A673 (cell line): ENCODE measurements at regions of chr9 and their contacts with region 1.

Region 1: GRCh38 chr9:133184962-133185361 is 21.2 kb upstream of the GBGT1 start:
- DNase-seq: peak; percentile 90
- H3K4me3 ChIP-seq: no peak overlapping the region
- H3K27ac ChIP-seq: no peak overlapping the region
- H3K4me1 ChIP-seq: no peaks in the 10 kb centered on the region
- H3K27me3 ChIP-seq: peaks cover 47% of the 10 kb centered on the region
- CTCF ChIP-seq: peak; percentile 71

Region 2: GRCh38 chr9:132733260-132733815 is 451.6 kb before region 1 on chr9:
- CTCF ChIA-PET with region 1: no interaction called
- POLR2A ChIA-PET with region 1: interaction called, 20 read pairs
- intact Hi-C with region 1: no loop called
- DNase-seq: no peak
- H3K4me3 ChIP-seq: no peak overlapping the region
- H3K27ac ChIP-seq: no peak overlapping the region
- H3K4me1 ChIP-seq: no peaks in the 10 kb centered on the region
- H3K27me3 ChIP-seq: no peaks in the 10 kb centered on the region
- CTCF ChIP-seq: no peak

Region 3: GRCh38 chr9:133275105-133276000 is 90.4 kb after region 1 on chr9 and contains the start of gene ABO:
- CTCF ChIA-PET with region 1: no interaction called
- POLR2A ChIA-PET with region 1: no interaction called
- intact Hi-C with region 1: loop called (anchors 10 kb)
- DNase-seq: no peak
- H3K4me3 ChIP-seq: peak within 1 kb of the TSS; percentile 23
- H3K27ac ChIP-seq: no peak within 1 kb of the TSS
- H3K4me1 ChIP-seq: no peaks in the 10 kb centered on the region
- H3K27me3 ChIP-seq: peaks cover 86% of the 10 kb centered on the region
- CTCF ChIP-seq: no peak
- total RNA-seq, gene ABO: not detected in 2 replicates

Region 4: GRCh38 chr9:133485361-133486260 is 300.6 kb after region 1 on chr9:
- CTCF ChIA-PET with region 1: interaction called, 17 read pairs
- POLR2A ChIA-PET with region 1: no interaction called
- intact Hi-C with region 1: loop called (anchors 1 kb)
- DNase-seq: no peak
- H3K4me3 ChIP-seq: no peak overlapping the region
- H3K27ac ChIP-seq: no peak overlapping the region
- H3K4me1 ChIP-seq: peaks cover 4% of the 10 kb centered on the region
- H3K27me3 ChIP-seq: no peaks in the 10 kb centered on the region
- CTCF ChIP-seq: no peak

Region 5: DNA sequence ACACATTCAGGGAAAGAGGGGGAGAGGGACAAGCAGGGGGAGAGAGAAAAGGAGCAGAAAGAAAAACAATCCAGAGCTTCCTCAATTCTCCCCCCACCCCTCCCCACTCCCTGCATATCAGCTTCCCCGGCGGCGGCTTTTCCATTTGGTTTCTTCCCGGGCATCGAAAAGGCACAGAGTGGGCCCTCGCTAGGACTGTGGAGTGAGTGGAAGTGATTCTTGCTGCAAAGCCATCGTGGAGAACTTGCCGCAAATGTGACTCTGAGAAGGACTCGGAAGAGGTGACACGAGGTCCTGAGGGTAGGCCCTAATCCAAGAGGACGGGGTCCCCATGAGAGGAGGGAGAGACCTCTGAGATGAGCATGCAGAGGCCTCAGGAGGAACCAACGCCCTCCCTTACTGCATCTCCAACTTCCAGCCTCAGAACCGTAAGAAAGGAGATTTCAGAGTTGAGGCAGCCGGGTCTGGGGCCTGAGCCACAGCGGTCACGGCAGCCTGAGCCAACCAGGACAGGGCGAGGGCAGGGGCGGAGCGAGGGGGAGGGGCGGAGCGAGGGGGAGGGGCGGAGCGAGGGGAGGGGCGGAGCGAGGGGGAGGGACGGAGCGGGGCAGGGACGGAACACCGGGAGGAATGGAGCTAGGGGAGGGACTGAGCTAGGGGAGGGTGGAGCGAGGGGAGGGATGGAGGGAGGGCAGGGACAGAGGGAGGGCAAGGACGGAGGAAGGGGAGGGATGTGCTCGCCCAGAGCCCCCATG is 574.4 kb after region 1 on chr9:
- CTCF ChIA-PET with region 1: interaction called, 14 read pairs
- POLR2A ChIA-PET with region 1: no interaction called
- intact Hi-C with region 1: no loop called
- DNase-seq: no peak
- H3K4me3 ChIP-seq: no peak overlapping the region
- H3K27ac ChIP-seq: no peak overlapping the region
- H3K4me1 ChIP-seq: no peaks in the 10 kb centered on the region
- H3K27me3 ChIP-seq: no peaks in the 10 kb centered on the region
- CTCF ChIP-seq: no peak